WTC11 (cell line): ENCODE measurements at regions of chr5 and their contacts with region 1.

Region 1: DNA sequence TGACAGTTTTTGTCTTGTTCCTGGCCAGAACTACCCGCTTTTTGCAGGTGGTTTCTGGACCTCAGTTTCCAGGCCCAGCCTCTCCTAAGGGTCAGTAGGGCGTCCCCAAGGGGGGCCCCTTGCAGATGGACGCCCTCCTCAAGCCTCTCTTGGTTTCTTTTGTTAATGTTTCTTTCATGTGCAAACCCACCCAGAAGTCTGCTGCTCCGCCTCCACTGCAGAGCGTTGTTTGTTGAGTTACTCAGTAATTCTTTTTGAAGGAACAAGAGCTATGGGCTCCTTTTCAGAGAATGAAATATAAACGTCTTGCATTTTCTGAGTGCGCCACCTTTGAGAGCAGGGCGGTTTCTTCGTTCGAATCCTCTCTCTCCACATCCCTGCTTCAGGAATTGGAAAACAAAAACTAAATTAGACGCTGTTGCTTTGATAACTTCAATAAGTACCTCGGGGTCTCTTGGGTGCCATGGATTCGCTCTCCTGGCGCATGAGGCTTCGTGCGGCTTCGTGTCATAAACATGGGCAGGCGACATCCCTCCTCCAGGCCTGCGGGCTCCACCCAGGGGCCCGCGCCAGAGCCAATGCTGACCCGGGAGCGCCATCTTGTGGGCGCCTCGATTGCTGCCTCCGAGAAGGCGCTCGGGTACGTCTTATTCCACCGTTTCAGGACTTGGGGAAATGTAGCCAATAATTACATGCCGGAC is 38.3 kb upstream of the CKMT2 start:
- DNase-seq: peak; percentile 89
- ATAC-seq: peak; percentile 95
- H3K4me3 Mint-ChIP-seq: peak overlapping the region; percentile 52
- H3K27ac Mint-ChIP-seq: no peak overlapping the region
- H3K4me1 Mint-ChIP-seq: peaks cover 34% of the 10 kb centered on the region
- H3K27me3 Mint-ChIP-seq: peaks cover 4% of the 10 kb centered on the region
- CTCF ChIP-seq: peak; percentile 77

Region 2: GRCh38 chr5:80711938-80712337 is 482.8 kb before region 1 on chr5:
- CTCF ChIA-PET with region 1: interaction called, 15 read pairs
- POLR2A ChIA-PET with region 1: no interaction called
- DNase-seq: peak; percentile 67
- ATAC-seq: peak; percentile 98
- H3K4me3 Mint-ChIP-seq: no peak overlapping the region
- H3K27ac Mint-ChIP-seq: no peak overlapping the region
- H3K4me1 Mint-ChIP-seq: peaks cover 13% of the 10 kb centered on the region
- H3K27me3 Mint-ChIP-seq: no peaks in the 10 kb centered on the region
- CTCF ChIP-seq: no peak

Region 3: DNA sequence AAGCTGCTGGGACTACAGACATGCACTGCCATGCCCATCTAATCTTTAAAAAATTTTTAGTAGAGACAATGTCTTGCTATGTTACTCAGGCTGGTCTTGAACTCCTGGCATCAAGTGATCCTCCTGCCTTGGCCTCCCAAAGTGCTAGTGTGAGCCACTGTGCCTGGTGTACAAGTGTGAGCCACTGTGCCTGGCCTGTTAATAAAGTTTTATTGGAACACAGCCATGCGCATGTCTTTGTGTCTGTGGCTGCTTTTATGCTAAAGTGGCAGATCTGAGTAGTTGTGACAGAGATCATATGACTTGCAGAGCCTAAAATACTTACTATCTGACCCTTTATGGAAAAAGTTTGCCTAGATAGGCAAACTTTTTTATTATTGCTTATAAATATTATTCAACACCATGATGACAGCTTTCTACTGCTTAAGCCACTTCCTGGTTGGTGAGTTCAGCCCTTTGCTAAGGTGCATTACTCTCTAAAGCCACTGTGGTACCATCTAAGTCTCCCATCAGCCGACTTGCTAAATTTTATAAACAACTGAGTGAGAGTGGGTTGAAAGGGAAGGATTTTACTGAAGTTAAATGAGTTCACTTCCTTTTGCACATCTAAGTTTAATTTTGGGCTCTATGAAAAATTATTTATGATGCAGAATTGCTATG is 101.1 kb before region 1 on chr5:
- CTCF ChIA-PET with region 1: no interaction called
- POLR2A ChIA-PET with region 1: no interaction called
- DNase-seq: no peak
- ATAC-seq: no peak
- H3K4me3 Mint-ChIP-seq: no peak overlapping the region
- H3K27ac Mint-ChIP-seq: no peak overlapping the region
- H3K4me1 Mint-ChIP-seq: peaks cover 4% of the 10 kb centered on the region
- H3K27me3 Mint-ChIP-seq: no peaks in the 10 kb centered on the region
- CTCF ChIP-seq: no peak

Region 4: GRCh38 chr5:81233080-81233634 is 38.4 kb after region 1 on chr5 and contains the start of gene CKMT2:
- CTCF ChIA-PET with region 1: no interaction called
- POLR2A ChIA-PET with region 1: no interaction called
- DNase-seq: peak; percentile 88
- ATAC-seq: peak; percentile 94
- H3K4me3 Mint-ChIP-seq: peak within 1 kb of the TSS; percentile 81
- H3K27ac Mint-ChIP-seq: peak within 1 kb of the TSS; percentile 89
- H3K4me1 Mint-ChIP-seq: peaks cover 28% of the 10 kb centered on the region
- H3K27me3 Mint-ChIP-seq: no peaks in the 10 kb centered on the region
- CTCF ChIP-seq: no peak
- total RNA-seq, gene CKMT2: 1.8 to 3.1 TPM (median 2.4 TPM) in 3 replicates